AG04449 (cell line): ENCODE measurements at regions of chr12 and their contacts with region 1.

Region 1: DNA sequence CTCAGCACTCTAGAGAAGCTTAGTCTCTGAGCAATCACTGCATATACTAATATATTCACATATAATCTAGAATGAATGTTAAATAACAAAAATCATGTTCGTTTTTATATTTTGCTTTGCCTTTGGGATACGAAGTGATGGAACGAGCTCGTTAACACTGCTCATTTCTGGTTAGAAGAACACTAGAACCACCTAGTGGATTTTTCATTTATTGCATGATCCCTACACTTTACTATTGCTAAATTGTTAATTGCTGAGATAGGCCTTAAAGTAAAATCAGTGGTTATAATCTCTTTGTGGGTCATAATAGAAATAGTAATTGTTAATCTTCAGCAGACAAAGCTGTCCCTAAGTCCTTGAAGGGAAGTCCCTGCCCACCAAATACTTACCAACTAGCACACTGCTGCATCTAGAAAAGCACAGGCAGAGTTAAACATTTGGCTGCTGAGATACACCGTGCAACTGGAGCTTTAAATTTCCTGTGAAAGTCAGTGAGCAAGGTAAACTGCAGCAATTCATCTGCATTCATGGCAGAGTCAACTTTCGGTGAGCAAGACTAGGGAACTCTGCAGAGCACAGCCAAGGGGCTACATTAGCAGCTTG is 353.7 kb downstream of the APAF1 start:
- DNase-seq: peak; percentile 3
- H3K4me3 ChIP-seq: no peak overlapping the region
- CTCF ChIP-seq: peak; percentile 31

Region 2: GRCh38 chr12:98698603-98699463 is 300.0 kb before region 1 on chr12:
- CTCF ChIA-PET with region 1: interaction called, 52 read pairs
- POLR2A ChIA-PET with region 1: no interaction called
- DNase-seq: peak; percentile 4
- H3K4me3 ChIP-seq: no peak overlapping the region
- CTCF ChIP-seq: peak; percentile 74

Region 3: GRCh38 chr12:98714426-98714825 is 284.4 kb before region 1 on chr12:
- CTCF ChIA-PET with region 1: interaction called, 16 read pairs
- POLR2A ChIA-PET with region 1: no interaction called
- DNase-seq: no peak
- H3K4me3 ChIP-seq: no peak overlapping the region
- CTCF ChIP-seq: no peak

Region 4: DNA sequence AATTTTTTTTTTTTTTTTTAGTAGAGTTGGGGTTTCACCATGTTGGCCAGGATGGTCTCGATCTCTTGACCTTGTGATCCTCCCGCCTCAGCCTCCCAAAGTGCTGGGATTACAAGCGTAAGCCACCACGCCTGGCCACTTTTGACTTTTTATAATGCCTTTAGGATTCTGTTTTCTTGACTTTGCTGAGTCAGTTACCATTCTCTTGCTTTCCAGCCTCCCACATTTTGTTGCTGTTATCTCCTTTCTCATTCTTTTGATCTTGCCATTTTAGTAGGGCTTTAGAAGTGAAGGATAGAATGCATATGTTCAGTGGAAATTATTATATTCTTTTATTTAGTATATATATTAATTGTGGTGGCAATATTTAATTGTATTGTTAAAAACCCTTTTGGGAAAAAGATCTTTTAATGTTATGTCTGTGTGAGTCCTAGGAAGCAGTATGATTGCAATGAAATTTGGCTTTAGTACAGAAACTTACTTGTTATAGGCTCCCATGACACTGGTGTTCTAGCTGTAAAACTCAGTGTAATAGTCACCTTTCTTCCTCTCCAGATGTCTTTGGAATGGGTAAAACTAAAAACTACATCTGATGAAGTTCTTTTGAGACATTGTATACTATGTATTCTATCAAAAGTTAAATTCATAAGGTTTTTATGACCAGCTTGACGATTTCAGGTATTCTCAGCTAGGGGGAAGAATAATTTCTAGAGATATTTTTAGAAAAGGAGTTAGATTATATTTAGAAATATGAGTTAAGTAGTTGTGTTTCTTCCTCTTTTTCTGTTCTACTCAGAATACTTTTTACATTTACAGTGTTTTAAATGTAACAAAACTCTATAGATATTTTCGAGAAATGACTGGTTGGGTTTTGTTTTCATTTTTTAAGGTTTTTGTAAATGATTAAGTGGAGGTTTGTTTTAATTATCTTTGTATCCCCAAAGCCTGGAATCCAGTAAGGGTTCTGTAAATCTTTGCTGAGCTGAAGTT is 279.0 kb before region 1 on chr12:
- CTCF ChIA-PET with region 1: interaction called, 28 read pairs
- POLR2A ChIA-PET with region 1: no interaction called
- DNase-seq: no peak
- H3K4me3 ChIP-seq: no peak overlapping the region
- CTCF ChIP-seq: no peak

Region 5: GRCh38 chr12:98725476-98726247 is 273.1 kb before region 1 on chr12:
- CTCF ChIA-PET with region 1: interaction called, 28 read pairs
- POLR2A ChIA-PET with region 1: no interaction called
- DNase-seq: peak; percentile 26
- H3K4me3 ChIP-seq: no peak overlapping the region
- CTCF ChIP-seq: peak; percentile 66

Region 6: DNA sequence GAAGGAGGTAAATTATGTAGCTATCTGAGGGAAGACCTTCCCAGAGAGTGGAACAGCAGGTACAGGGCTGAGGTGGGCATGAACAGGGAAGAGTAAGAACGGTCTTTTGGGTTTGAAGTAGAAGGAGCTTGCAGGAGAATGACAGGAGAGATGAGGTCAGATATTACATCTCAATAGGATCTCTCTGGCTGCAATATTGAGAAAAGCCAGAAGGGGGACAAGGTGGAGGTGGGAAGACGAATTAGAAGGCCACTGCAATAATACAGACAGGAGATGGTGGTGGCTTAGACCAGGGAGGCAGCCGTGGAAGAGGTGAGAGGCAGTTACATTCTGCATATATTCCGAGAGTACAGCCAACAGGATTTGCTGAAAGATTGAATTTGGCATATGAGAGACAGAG is 43.5 kb before region 1 on chr12:
- CTCF ChIA-PET with region 1: interaction called, 16 read pairs
- POLR2A ChIA-PET with region 1: no interaction called
- DNase-seq: no peak
- H3K4me3 ChIP-seq: no peak overlapping the region
- CTCF ChIP-seq: peak; percentile 14